Activated CD4-positive, alpha-beta memory T cell treated with anti-CD3 and anti-CD28 coated beads, Interleukin-2, amount 10 ng/mL, durations not matched to agents 7 days and 5 days (primary cell): ENCODE measurements at regions of chr3 and their contacts with region 1.

Region 1: DNA sequence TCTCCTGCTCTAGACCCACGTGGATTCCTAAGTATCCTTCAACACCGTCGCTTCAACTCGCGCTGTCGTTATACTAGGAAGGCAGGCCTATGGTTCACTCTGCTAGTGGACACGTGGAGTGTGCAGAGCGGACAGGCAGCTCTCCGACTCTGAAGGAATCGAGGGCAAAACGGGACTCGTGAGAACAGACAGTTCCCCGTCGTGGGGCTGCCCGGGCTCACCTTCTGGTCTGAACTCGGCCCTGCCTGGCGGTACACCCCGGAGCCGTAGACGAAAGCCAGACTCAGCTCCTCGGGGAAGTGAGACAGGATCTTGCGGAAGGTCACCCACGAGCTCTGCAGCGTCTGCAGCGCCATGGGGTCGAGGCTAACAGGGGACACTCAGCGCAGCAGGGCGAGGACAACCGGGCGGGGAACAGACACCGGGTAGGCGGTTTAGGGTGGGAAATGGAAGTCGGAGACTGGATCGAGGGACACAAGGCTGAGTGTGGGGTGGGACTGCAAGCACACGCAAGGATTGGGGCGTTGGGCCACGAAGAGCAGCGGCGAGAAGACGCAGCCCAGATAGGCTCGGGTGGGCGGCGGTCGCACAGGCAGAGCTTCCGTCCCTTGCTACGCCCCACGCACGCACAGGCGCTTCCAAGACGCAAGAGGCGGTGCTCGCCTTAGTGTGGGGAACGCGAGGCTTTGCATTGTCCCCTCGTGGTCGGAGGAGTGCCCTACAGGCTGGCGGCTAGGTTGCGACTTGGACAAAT is at the start of gene TAMM41:
- DNase-seq: peak; percentile 91
- H3K4me3 Mint-ChIP-seq: peak within 1 kb of the TSS; percentile 95
- H3K27ac Mint-ChIP-seq: peak within 1 kb of the TSS; percentile 90
- H3K4me1 Mint-ChIP-seq: peaks cover 25% of the 10 kb centered on the region
- H3K27me3 Mint-ChIP-seq: no peaks in the 10 kb centered on the region
- total RNA-seq, gene TAMM41: 19.5 to 20.9 TPM

Region 2: DNA sequence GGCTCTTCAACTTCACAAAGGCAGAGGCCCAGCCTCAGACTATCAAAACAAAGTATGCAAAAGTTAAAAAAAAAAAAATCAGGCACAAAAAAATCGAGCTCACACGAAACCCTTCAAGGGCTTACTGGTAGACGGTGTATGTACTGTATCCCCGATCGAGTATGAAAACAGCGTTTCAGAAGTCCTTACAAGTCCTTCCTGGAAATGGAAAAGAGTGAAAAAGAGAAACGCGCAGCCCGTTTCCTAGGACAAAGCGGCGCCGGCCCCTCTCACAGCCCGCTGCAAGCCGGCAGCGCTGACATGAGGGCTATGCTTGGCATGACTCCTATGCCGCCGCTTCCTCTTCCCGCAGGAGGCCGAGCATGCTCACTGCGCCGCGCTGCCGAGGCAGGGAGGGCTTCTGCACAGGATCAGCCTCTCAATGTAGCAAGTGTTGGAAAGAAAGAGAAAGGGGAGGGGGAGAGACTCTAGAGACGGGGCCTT is 202.8 kb before region 1 on chr3 and contains the start of gene VGLL4:
- CTCF ChIA-PET with region 1: interaction called, 3 read pairs
- POLR2A ChIA-PET with region 1: interaction called, 13 read pairs
- DNase-seq: peak; percentile 72
- H3K4me3 Mint-ChIP-seq: peak within 1 kb of the TSS; percentile 93
- H3K27ac Mint-ChIP-seq: peak within 1 kb of the TSS; percentile 94
- H3K4me1 Mint-ChIP-seq: peaks cover 35% of the 10 kb centered on the region
- H3K27me3 Mint-ChIP-seq: peaks cover 2% of the 10 kb centered on the region
- total RNA-seq, gene VGLL4: 47.8 to 49.2 TPM

Region 3: GRCh38 chr3:11770477-11771391 is 75.7 kb before region 1 on chr3:
- CTCF ChIA-PET with region 1: interaction called, 7 read pairs
- POLR2A ChIA-PET with region 1: interaction called, 13 read pairs
- DNase-seq: peak; percentile 91
- H3K4me3 Mint-ChIP-seq: peak overlapping the region; percentile 26
- H3K27ac Mint-ChIP-seq: peak overlapping the region; percentile 83
- H3K4me1 Mint-ChIP-seq: peaks cover 40% of the 10 kb centered on the region
- H3K27me3 Mint-ChIP-seq: no peaks in the 10 kb centered on the region

Region 4: GRCh38 chr3:11976976-11977375 is 130.5 kb after region 1 on chr3:
- CTCF ChIA-PET with region 1: no interaction called
- POLR2A ChIA-PET with region 1: no interaction called
- DNase-seq: no peak
- H3K4me3 Mint-ChIP-seq: no peak overlapping the region
- H3K27ac Mint-ChIP-seq: no peak overlapping the region
- H3K4me1 Mint-ChIP-seq: no peaks in the 10 kb centered on the region
- H3K27me3 Mint-ChIP-seq: peaks cover 13% of the 10 kb centered on the region